Calu3 (cell line): ENCODE measurements at regions of chr15 and their contacts with region 1.

Region 1: DNA sequence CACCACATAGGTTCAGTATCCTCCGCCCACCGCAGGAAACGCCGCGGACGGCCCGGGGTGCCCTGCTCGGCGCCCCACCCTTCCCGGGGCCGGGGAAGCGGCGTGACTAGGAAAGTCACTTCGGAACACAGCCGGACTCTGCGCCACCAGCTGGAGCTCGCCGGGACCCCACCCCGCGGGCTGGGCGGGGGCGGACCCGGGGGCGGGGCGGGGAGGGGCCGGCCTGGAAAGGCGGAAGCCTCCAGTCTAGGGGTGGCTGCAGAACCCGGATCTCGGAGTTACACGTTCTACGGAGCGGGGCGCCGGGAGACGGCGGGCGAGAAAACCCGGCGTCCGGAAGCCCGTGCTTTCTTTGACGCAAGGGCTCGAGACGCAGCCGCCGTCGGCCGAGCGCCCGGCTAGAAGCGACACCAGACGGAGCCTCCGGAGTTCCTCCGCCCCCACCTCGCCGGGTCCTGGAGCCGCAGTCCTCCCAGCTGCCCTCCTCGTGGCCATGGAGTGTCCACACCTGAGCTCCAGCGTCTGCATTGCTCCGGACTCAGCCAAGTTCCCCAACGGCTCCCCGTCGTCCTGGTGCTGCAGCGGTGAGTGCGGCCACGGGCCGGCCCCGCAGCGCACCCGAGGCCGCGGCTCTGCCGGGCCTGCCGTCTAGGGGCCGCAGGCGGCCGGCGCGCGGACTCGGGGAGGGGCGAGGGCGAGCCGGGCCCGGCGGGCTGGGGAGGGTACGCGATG is at the start of gene USP3:
- DNase-seq: peak; percentile 97
- H3K4me3 Mint-ChIP-seq: peak within 1 kb of the TSS; percentile 88
- H3K27ac Mint-ChIP-seq: peak within 1 kb of the TSS; percentile 97
- H3K4me1 Mint-ChIP-seq: peaks cover 77% of the 10 kb centered on the region
- H3K27me3 Mint-ChIP-seq: no peaks in the 10 kb centered on the region
- CTCF ChIP-seq: no peak
- total RNA-seq, gene USP3: 70.7 and 80.8 TPM in 2 replicates

Region 2: DNA sequence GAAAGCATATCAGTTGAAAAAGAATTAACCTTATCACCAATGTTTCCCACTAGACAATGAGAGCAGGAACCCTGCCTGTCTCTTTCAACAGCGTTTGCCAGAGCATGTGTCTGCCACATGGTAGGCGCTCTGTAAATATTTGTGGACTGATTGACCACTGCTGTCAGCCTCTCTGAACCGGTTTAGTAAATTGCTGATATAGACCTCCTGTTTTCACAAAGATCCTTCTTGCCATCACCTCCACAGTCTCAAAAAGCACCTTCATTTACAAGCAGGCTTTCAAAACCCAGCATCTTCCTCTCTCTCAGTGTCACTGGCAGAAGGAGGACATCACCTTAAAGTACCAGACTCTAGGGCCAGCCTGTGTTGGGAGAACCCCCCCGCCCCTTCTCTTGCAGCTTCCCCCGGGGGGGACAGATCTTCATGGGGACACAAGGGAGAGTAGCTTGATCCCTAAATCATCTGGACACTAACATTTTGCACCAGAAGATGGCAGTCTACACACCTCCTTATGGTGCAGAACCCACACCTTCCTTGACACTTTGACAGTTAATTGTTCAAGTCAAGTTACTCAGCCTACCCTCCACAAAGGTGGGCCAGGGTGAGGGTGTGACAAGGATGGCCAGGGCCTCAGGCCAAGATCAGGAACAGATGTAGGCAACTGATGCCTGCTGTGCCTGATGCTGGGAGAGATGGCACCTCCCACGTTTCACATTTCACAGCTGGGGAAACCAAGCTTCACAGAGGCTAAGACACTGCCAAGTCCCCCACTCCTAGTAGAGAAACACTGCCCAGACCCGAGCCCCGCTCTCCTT is 37.8 kb before region 1 on chr15:
- CTCF ChIA-PET with region 1: interaction called, 30 read pairs
- intact Hi-C with region 1: loop called (anchors 2 kb)
- DNase-seq: peak; percentile 69
- H3K4me3 Mint-ChIP-seq: no peak overlapping the region
- H3K27ac Mint-ChIP-seq: no peak overlapping the region
- H3K4me1 Mint-ChIP-seq: peaks cover 51% of the 10 kb centered on the region
- H3K27me3 Mint-ChIP-seq: no peaks in the 10 kb centered on the region
- CTCF ChIP-seq: peak; percentile 68

Region 3: GRCh38 chr15:63487076-63487757 is 17.2 kb before region 1 on chr15:
- CTCF ChIA-PET with region 1: interaction called, 14 read pairs
- intact Hi-C with region 1: no loop called
- DNase-seq: peak; percentile 92
- H3K4me3 Mint-ChIP-seq: peak overlapping the region; percentile 8
- H3K27ac Mint-ChIP-seq: no peak overlapping the region
- H3K4me1 Mint-ChIP-seq: peaks cover 31% of the 10 kb centered on the region
- H3K27me3 Mint-ChIP-seq: no peaks in the 10 kb centered on the region
- CTCF ChIP-seq: peak; percentile 88

Region 4: DNA sequence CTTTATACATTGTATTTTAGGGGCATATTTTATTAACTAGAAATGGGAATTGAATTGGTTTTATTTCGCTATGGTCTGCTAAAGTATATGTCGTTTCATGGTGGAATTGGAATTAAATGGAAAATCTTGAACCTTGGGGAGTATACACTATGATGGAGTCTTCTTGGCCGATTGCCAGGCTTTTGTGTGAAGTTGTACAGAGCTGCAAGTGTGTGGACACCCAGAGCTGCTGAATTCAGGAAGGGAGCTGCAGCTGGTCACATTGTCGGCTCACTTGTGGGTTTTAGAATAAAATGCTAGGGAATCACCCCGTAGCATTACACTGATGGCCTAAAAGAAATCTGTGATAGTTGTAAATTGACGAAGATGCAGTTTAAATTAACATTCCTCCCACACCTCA is 35.1 kb after region 1 on chr15:
- CTCF ChIA-PET with region 1: no interaction called
- intact Hi-C with region 1: no loop called
- DNase-seq: no peak
- H3K4me3 Mint-ChIP-seq: no peak overlapping the region
- H3K27ac Mint-ChIP-seq: no peak overlapping the region
- H3K4me1 Mint-ChIP-seq: peaks cover 25% of the 10 kb centered on the region
- H3K27me3 Mint-ChIP-seq: no peaks in the 10 kb centered on the region
- CTCF ChIP-seq: no peak

Region 5: GRCh38 chr15:63600616-63601025 is 96.2 kb after region 1 on chr15:
- CTCF ChIA-PET with region 1: interaction called, 10 read pairs
- intact Hi-C with region 1: no loop called
- DNase-seq: peak; percentile 93
- H3K4me3 Mint-ChIP-seq: peak overlapping the region; percentile 96
- H3K27ac Mint-ChIP-seq: peak overlapping the region; percentile 64
- H3K4me1 Mint-ChIP-seq: peaks cover 21% of the 10 kb centered on the region
- H3K27me3 Mint-ChIP-seq: no peaks in the 10 kb centered on the region
- CTCF ChIP-seq: no peak